PC-3 (cell line): ENCODE measurements at regions of chr4 and their contacts with region 1.

Region 1: GRCh38 chr4:69330345-69331047 is 50.2 kb downstream of the UGT2B28 start:
- DNase-seq: no peak
- ATAC-seq: no peak
- H3K4me3 ChIP-seq: no peak overlapping the region
- H3K27ac ChIP-seq: no peak overlapping the region
- H3K4me1 ChIP-seq: no peaks in the 10 kb centered on the region
- H3K27me3 ChIP-seq: no peaks in the 10 kb centered on the region
- CTCF ChIP-seq: no peak

Region 2: DNA sequence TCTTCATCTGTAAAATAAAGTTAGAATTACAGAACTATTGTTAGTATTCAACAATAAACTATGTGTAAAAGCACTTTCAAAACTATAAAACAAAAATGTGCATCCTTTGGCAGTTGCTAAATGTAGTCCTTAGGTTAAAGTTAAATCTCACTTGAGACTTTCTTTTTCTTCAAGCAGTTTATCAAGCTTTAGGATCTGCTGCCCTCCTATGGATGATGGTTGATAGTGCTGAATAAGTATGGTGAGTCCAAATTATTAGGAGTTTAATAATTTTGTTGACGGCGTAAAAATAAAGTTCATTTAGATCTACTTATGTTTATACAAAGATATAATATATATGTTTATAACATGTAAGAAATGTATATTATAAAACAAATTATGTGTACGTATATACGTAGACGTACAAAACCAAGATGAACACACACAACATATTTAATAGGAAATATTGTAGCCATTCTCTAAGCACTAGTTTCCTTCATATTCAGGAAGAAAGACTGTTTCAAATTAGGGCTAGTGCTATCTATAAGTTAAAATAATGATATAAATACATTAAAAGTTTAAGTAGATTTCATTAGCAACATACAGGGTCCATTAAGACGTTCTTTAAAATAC is 286.7 kb after region 1 on chr4:
- CTCF ChIA-PET with region 1: no interaction called
- POLR2A ChIA-PET with region 1: no interaction called
- intact Hi-C with region 1: loop called (anchors 5 kb)
- DNase-seq: peak; percentile 76
- ATAC-seq: peak; percentile 51
- H3K4me3 ChIP-seq: no peak overlapping the region
- H3K27ac ChIP-seq: no peak overlapping the region
- H3K4me1 ChIP-seq: no peaks in the 10 kb centered on the region
- H3K27me3 ChIP-seq: peaks cover 11% of the 10 kb centered on the region; the same call in 1 of the 2 replicates
- CTCF ChIP-seq: peak; percentile 83